Kidney (tissue), 22 donors: ENCODE measurements at regions of chr1 and their contacts with region 1.

Region 1: DNA sequence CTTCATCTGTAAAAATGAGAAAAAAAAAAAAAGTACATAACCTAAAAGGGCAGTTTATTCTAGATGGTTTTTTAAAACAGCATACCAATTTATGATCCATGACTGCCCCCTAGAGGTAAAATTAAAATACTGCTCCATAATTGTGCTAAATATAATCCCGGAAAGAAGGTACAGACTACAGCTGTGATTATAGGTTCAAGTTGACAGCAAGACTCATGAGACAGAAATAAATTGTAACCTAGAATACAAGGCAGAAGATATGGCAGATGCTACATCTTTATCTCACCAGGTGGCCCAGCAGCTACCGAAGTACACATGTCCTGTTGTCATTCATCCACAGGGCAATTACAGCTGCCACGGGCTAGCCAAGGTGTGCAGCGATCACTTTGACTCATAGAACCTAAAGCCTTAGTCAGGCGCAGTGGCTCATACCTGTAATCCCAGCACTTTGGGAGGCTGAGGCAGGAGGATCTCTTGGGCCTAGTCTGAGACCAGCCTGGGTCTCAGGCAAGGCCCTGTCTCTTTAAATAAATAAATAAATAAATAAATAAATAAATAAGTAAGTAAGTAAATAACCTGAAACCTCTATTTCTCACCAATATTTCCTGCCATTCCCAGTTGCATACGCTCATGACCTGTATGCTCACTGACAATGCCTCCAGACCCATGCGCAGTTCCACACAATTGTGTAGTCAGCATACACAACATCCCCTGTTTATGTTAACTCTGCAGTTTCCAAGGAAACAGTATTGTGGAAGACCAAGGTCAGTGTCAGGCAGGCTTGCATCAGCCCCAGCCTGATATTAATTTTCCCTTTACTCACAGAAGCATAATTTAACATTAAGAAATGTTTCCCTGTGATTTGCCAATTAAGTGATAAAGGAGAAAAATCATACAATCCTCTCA is 18.3 kb upstream of the PPIE start:
- DNase-seq: peak in 2 of 5 donors; percentile 74 to 87
- H3K4me3 ChIP-seq: no peak overlapping the region
- H3K27ac ChIP-seq: no peak overlapping the region
- H3K4me1 ChIP-seq: no peaks in the 10 kb centered on the region
- H3K27me3 ChIP-seq: peaks cover 13% of the 10 kb centered on the region
- CTCF ChIP-seq: peak; percentile 59

Region 2: DNA sequence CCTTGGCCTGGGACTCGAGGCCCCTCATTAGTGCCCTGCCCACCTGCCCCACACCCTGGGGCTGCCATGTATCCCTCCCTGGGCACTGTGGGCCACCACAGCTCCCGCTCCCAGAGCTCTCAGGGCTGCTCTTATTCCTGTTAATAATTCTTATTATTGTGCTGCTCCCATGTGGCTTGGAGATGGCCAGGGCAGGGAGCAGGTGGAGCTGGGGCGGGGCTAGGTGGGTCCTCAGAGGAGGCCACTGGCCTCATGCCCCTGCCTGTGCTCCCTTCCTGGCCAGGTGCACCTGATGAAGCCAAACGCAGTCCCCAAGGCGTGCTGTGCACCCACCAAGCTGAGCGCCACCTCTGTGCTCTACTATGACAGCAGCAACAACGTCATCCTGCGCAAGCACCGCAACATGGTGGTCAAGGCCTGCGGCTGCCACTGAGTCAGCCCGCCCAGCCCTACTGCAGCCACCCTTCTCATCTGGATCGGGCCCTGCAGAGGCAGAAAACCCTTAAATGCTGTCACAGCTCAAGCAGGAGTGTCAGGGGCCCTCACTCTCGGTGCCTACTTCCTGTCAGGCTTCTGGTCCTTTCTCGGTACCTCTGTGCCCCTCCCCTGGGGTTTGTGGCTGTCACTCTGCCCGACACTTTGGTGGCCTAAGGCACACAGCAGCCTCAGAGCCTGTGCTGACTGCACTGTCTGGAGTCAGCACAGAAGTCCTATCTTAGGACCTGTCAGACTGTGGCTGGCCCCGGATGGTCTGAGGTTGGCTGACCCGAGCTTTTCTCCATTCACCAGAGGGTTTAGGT is 194.8 kb before region 1 on chr1:
- intact Hi-C with region 1: no loop called
- DNase-seq: no peak
- H3K4me3 ChIP-seq: no peak overlapping the region
- H3K27ac ChIP-seq: no peak overlapping the region
- H3K4me1 ChIP-seq: no peaks in the 10 kb centered on the region
- H3K27me3 ChIP-seq: no peaks in the 10 kb centered on the region
- CTCF ChIP-seq: no peak

Region 3: DNA sequence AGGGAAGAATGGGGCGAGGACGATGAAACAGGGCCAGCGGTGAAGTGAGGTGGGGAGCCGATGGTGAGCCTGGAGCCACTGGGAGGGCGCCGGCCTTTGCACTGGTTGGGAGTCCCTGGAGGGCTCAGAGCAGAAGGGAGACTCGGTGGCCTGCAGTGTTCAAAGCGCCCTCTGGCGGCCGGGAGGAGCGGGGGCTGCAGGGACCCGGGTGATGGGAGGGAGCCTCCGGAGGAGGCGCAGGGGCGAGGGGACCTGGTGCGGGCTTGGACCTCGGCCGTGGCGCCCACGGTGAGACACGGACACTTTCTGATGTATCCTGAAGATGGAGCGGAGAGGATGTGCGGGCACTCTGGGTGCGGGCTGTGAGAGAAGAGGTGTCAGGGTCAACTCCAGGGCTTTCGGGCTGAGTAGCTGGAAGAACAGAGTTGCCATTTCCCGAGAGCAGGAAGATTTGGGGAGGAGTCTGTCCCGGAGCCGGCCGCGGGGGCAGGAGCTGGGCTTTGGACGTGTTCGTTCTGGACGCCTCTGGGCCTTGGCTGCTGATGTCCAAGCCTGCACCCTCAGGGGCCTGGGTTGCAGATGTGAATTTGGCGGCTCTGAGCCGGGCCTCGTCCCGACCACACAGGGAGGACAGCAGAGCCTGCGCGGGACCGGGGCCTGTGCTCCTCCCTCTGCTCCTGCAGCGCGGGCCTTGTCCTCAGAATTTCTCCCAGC is 110.6 kb before region 1 on chr1:
- intact Hi-C with region 1: loop called (anchors 10 kb)
- DNase-seq: peak; percentile 55 to 81 (median 69)
- H3K4me3 ChIP-seq: no peak overlapping the region
- H3K27ac ChIP-seq: no peak overlapping the region
- H3K4me1 ChIP-seq: no peaks in the 10 kb centered on the region
- H3K27me3 ChIP-seq: no peaks in the 10 kb centered on the region
- CTCF ChIP-seq: peak; percentile 51

Region 4: DNA sequence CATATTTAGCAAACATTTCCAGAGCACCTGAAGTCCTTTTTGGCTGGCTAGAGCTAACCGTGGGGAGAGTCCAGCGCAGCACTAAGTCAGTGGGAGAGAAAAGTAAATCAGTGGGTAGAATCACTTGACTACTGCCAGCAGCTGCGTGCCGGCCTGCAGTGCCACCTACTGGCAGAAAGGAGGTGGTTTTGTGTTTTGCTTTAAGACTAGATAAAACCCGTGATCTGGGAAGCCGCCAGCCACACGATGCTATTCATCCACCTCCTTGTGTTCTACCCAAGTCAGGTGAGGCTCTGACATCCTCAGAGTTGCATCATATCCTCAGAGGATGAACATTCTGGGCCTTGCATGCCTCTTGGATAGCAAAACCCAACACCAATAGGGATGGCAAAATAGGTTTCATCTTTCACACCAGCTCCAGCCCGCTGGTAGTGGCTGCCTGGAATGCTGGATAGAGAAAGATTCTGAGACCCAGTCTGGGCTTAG is 66.8 kb before region 1 on chr1:
- intact Hi-C with region 1: no loop called
- DNase-seq: peak; percentile 84 to 88 (median 86)
- H3K4me3 ChIP-seq: no peak overlapping the region
- H3K27ac ChIP-seq: no peak overlapping the region
- H3K4me1 ChIP-seq: peaks cover 0 to 9% (median 0%) of the 10 kb centered on the region in 3 donors
- H3K27me3 ChIP-seq: no peaks in the 10 kb centered on the region
- CTCF ChIP-seq: peak; percentile 81

Region 5: DNA sequence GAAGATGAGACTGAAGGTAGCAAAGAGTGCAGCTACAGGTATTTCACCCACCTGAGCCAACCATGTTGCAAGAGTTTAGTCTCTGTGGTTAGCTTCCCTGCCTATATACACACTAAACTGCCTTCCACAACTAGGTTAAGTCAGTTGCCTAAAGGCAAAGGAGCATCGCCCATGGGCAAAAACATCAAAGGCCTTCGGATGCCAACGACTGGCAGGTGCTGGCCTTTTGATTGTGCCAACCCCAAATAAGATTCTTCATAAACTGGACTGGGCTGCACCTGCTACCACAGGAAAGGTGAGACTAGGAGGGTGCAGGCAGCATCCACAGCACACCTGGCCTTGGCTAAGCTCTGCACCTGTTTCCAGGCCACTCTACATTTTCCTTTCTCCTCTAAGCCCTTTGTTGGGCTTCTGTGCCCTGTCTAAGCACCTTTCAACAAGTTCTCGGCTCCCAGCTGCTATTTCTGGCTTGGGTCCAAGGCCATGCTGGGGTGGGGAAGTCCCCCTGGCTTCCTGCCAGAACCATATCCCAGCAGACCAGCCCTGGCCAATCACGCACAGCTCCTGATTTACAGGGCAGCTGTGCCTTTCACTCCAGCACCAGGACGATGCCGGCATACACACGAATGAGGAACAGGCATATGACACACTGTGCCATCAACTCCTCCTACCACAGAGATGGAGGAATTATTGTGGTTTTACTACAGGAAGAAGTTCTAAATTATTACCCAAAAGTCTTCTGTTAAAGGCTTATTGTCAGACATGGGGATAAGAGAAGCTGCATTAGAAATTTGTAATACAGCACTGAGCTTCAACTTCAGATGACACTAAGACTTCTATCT is 125.1 kb after region 1 on chr1:
- intact Hi-C with region 1: loop called (anchors 10 kb)
- DNase-seq: peak; percentile 84 to 96 (median 92)
- H3K4me3 ChIP-seq: no peak overlapping the region
- H3K27ac ChIP-seq: no peak overlapping the region
- H3K4me1 ChIP-seq: peaks cover 0 to 11% (median 8%) of the 10 kb centered on the region in 3 donors
- H3K27me3 ChIP-seq: no peaks in the 10 kb centered on the region
- CTCF ChIP-seq: no peak

Region 6: GRCh38 chr1:40132383-40133311 is 412.3 kb after region 1 on chr1:
- intact Hi-C with region 1: no loop called
- DNase-seq: peak in 4 of 5 donors; percentile 47 to 61 (median 52)
- H3K4me3 ChIP-seq: peak overlapping the region in 2 of 3 donors; percentile 33 to 47
- H3K27ac ChIP-seq: no peak overlapping the region
- H3K4me1 ChIP-seq: no peaks in the 10 kb centered on the region
- H3K27me3 ChIP-seq: peaks cover 2% of the 10 kb centered on the region
- CTCF ChIP-seq: no peak

Region 7: DNA sequence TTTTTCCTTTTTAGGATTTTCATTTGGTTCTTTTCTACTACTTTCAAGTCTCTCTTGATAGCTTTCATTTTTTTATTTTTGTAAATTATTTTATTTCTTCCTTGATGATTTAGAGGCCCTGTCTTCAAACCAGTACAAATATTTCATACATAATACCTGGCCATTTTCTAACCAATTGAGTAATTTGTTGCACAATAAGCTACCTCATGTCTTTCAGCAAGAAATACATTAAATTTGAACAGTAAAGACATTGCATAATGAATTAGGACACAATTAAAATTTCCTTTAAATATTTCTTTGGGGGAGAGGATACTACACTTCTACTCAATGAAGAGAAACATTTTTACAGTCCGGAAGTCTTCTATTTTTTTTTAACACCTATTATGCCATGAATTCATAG is 612.3 kb after region 1 on chr1:
- intact Hi-C with region 1: no loop called
- DNase-seq: no peak
- H3K4me3 ChIP-seq: no peak overlapping the region
- H3K27ac ChIP-seq: no peak overlapping the region
- H3K4me1 ChIP-seq: no peaks in the 10 kb centered on the region
- H3K27me3 ChIP-seq: no peaks in the 10 kb centered on the region
- CTCF ChIP-seq: no peak